ENCODE measurements at regions of chr2 and their contacts with region 1.

Region 1: DNA sequence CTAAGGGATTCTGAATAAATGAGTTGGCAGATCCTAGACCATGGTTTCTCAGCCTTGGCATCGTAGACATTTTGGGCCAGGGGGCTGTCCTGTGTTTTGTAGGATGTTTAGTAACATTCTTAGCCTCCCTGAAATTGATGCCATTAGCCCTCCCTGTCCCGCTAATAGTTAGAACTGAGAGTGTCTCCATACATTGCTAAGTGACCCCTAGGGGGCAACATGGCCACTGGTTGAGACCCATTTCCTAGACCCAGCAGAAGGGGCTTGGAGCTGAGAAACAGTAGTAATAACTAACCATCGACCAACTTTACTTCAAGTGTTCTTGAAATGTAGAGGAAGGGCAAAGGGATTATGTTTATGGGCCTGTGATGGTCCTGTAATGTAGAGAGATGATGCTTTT is 40.8 kb downstream of the KCMF1 start:
- DNase-seq: no peak
- ATAC-seq: no peak

Region 2: DNA sequence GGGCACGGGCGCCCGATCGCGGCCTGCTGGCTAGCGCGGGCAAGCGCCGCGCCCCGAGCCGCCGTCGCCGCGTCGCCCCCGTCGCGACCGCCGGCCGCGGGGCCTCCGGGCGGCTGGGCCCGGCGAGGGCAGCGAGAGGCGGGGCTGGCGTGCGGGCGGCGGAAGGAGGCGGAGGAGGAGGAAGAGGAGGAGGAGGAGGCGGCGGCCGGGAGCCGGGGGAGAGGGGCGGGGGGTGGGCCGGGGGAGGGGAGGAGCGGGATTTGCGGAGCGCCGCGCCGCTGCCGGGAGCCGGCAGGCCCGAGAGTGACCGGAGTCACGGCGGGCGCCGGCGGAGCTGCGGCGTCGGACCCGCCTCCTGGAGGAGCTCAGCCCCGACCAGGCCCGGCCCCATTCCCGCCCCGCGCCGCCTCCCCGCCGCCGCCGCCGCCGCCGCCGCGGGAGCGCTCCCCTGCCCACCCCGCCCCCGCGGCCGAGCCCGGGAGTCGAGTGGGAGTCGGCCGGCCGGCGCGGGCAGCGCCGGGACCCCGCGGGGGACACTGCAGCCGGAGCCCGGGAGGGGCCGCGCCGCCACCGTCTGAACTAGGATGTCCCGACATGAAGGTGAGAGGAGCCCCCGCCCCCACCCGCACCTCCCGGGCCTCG is 40.8 kb before region 1 on chr2 and contains the start of gene KCMF1:
- intact Hi-C with region 1: loop called in 1 of 2 experiments (anchors 5 kb)
- DNase-seq: peak; percentile 82
- ATAC-seq: peak; percentile 70 to 72
- total RNA-seq, gene KCMF1: 71.2 to 81.0 TPM

Region 3: DNA sequence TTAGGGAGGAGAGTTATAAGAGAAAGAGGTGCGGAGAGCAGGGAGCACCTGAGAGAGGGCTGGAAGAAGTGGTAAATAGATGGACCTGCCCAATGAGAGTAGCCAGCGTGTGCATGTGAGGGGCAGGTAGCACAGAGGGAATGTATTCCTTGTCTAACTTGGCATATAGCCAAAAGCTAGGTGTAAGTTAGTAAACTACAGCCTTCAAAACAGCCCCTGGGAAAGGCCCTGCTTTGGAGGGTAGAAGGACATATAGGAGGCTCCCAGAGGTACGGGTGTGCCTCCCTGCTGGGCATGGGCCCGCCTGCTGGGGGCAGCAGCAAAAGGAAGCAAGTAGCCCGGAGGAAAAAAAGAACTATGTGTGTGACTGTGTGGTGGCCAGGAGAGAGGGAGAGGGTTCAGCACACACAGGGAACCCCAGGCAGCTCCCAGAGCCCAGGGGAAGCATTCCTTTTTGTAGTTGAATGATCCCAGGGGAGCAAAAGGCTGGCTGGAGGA is 169.4 kb after region 1 on chr2:
- intact Hi-C with region 1: no loop called
- DNase-seq: no peak
- ATAC-seq: peak in 1 of 2 donors; percentile 10

Measured in left cardiac atrium (tissue), 4 donors.